ENCODE measurements at regions of chr15 and their contacts with region 1.

Region 1: GRCh38 chr15:45205192-45205591 is 17.4 kb upstream of the SHF start:
- DNase-seq: peak; percentile 61
- ATAC-seq: no peak
- H3K4me3 ChIP-seq: no peak overlapping the region
- H3K4me3 Mint-ChIP-seq: no peak overlapping the region
- H3K27ac ChIP-seq: no peak overlapping the region
- H3K27ac Mint-ChIP-seq: no peak overlapping the region
- H3K4me1 ChIP-seq: peaks cover 6 to 8% of the 10 kb centered on the region in 2 donors
- H3K4me1 Mint-ChIP-seq: no peaks in the 10 kb centered on the region
- H3K27me3 ChIP-seq: peaks cover 0 to 3% (median 0%) of the 10 kb centered on the region in 4 experiments
- H3K27me3 Mint-ChIP-seq: peaks cover 24% of the 10 kb centered on the region
- CTCF ChIP-seq: peak; percentile 67

Region 2: GRCh38 chr15:43329960-43330779 is 1875.0 kb before region 1 on chr15 and contains the start of gene LCMT2:
- CTCF ChIA-PET with region 1: no interaction called
- POLR2A ChIA-PET with region 1: interaction called, 12 read pairs
- intact Hi-C with region 1: no loop called
- DNase-seq: peak; percentile 98
- ATAC-seq: peak; percentile 88
- H3K4me3 ChIP-seq: peak within 1 kb of the TSS; percentile 70 to 88 (median 84)
- H3K4me3 Mint-ChIP-seq: peak within 1 kb of the TSS; percentile 99
- H3K27ac ChIP-seq: peak within 1 kb of the TSS; percentile 94 to 98
- H3K27ac Mint-ChIP-seq: peak within 1 kb of the TSS; percentile 100
- H3K4me1 ChIP-seq: peaks cover 22 to 23% of the 10 kb centered on the region in 2 donors
- H3K4me1 Mint-ChIP-seq: peaks cover 32% of the 10 kb centered on the region
- H3K27me3 ChIP-seq: no peaks in the 10 kb centered on the region
- H3K27me3 Mint-ChIP-seq: no peaks in the 10 kb centered on the region
- CTCF ChIP-seq: peak; percentile 9
- total RNA-seq, gene LCMT2: 12.8 and 16.2 TPM in 2 replicates

Region 3: GRCh38 chr15:44545913-44546802 is 659.0 kb before region 1 on chr15:
- CTCF ChIA-PET with region 1: no interaction called
- POLR2A ChIA-PET with region 1: no interaction called
- intact Hi-C with region 1: no loop called
- DNase-seq: peak; percentile 30
- ATAC-seq: peak; percentile 17
- H3K4me3 ChIP-seq: no peak overlapping the region
- H3K4me3 Mint-ChIP-seq: peak overlapping the region; percentile 29
- H3K27ac ChIP-seq: peak overlapping the region in 1 of 2 donors; percentile 20
- H3K27ac Mint-ChIP-seq: peak overlapping the region; percentile 41
- H3K4me1 ChIP-seq: peaks cover 11 to 14% of the 10 kb centered on the region in 2 donors
- H3K4me1 Mint-ChIP-seq: peaks cover 48% of the 10 kb centered on the region
- H3K27me3 ChIP-seq: no peaks in the 10 kb centered on the region
- H3K27me3 Mint-ChIP-seq: no peaks in the 10 kb centered on the region
- CTCF ChIP-seq: peak; percentile 21

Region 4: GRCh38 chr15:45397116-45397665 is 192.0 kb after region 1 on chr15:
- CTCF ChIA-PET with region 1: interaction called, 32 read pairs
- POLR2A ChIA-PET with region 1: interaction called, 24 read pairs
- intact Hi-C with region 1: loop called (anchors 1 kb)
- DNase-seq: no peak
- ATAC-seq: no peak
- H3K4me3 ChIP-seq: no peak overlapping the region
- H3K4me3 Mint-ChIP-seq: no peak overlapping the region
- H3K27ac ChIP-seq: no peak overlapping the region
- H3K27ac Mint-ChIP-seq: no peak overlapping the region
- H3K4me1 ChIP-seq: peaks cover 13 to 18% of the 10 kb centered on the region in 2 donors
- H3K4me1 Mint-ChIP-seq: peaks cover 18% of the 10 kb centered on the region
- H3K27me3 ChIP-seq: no peaks in the 10 kb centered on the region
- H3K27me3 Mint-ChIP-seq: no peaks in the 10 kb centered on the region
- CTCF ChIP-seq: no peak